CD8-positive, alpha-beta T cell (primary cell): ENCODE measurements at regions of chr1 and their contacts with region 1.

Region 1: GRCh38 chr1:204506961-204507387 is 9.2 kb upstream of the MDM4 start:
- DNase-seq: peak; percentile 73 to 97 (median 85)
- ATAC-seq: peak; percentile 73
- H3K4me3 ChIP-seq: peak overlapping the region; percentile 39 to 64
- H3K4me3 Mint-ChIP-seq: peak overlapping the region; percentile 86
- H3K27ac ChIP-seq: peak overlapping the region; percentile 84 to 96
- H3K27ac Mint-ChIP-seq: peak overlapping the region; percentile 97
- H3K4me1 ChIP-seq: peaks cover 15% of the 10 kb centered on the region
- H3K4me1 Mint-ChIP-seq: peaks cover 33% of the 10 kb centered on the region
- H3K27me3 ChIP-seq: no peaks in the 10 kb centered on the region
- H3K27me3 Mint-ChIP-seq: no peaks in the 10 kb centered on the region
- CTCF ChIP-seq: no peak

Region 2: DNA sequence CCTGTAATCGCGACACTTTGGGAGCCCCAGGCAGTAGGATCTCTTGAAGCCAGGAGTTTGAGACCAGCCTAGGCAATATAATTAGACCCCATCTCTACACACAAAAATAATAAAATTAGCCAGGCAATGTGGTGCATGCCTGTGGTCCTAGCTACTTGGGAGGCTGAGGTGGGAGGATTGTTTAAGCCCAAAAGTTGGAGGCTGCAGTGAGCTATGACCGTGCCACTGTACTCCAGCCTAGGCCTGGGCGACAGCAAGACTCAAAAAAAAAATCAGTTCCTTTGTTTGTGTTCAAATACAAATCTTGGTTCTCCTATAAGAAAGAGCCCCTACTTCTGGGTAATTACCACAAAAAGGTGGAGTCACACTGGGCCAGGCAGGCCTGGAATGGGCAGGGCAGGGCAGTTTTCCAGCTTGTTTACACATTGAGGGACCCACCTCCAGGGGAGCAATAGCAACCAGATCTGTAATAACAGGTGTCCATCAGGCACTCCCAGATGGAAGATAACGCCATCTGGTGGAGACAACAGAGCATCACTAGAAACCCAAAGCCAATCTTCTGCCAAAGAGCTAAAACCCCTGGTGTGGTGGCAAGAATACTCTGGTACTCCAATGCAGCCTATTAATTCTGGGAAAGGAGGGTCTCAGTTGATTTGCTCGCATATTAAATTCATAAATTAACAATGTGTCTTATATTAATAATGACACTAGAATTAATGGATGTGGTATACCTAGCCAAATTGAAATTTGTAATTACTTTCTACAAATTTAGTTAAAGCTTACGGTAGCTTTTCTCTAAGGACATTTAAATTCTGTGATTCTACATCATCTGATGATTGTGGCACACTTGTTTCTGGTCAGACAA is 108.5 kb before region 1 on chr1:
- CTCF ChIA-PET with region 1: interaction called, 19 read pairs
- POLR2A ChIA-PET with region 1: interaction called, 3 read pairs
- intact Hi-C with region 1: no loop called
- DNase-seq: peak; percentile 16 to 86 (median 54)
- ATAC-seq: peak; percentile 97
- H3K4me3 ChIP-seq: no peak overlapping the region
- H3K4me3 Mint-ChIP-seq: no peak overlapping the region
- H3K27ac ChIP-seq: peak overlapping the region in 1 of 2 experiments; percentile 21
- H3K27ac Mint-ChIP-seq: peak overlapping the region; percentile 80
- H3K4me1 ChIP-seq: peaks cover 4% of the 10 kb centered on the region
- H3K4me1 Mint-ChIP-seq: peaks cover 9% of the 10 kb centered on the region
- H3K27me3 ChIP-seq: no peaks in the 10 kb centered on the region
- H3K27me3 Mint-ChIP-seq: no peaks in the 10 kb centered on the region
- CTCF ChIP-seq: peak; percentile 87

Region 3: DNA sequence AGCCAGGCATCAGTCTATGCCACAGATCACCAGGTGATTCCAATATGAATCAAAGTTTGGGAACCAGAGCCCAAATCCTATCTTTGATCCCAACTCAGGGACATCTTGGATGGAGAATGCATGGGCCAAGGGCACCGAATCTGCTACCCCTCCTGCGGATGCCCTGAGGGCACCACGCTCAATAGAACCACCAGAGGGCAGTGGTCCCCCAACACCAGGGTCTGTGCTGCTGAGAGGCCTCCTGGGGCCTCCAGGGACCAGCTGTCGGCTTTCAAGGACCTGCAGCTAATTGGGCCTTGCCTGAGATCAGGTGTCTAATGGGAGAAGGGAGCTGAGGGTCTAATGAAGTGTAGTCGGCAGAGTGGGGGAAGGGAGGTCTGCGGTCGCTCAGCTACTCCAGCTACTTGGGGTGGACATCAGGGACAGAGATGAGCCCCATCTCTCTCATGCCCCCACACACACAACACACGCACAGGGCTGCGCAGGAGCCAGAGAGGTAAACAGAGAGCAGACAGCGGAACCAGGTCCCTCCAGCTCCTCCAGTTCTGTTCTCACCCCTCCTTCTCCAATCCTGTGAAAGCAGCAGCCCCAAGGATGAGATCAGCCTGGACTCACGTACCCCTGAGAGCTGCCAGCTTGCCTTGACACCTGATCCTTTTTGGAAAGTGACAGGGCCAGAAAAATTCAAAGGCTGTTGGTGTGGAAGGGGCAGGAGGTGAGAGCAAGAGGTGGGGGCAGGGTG is 60.4 kb before region 1 on chr1:
- CTCF ChIA-PET with region 1: interaction called, 1,205 read pairs
- POLR2A ChIA-PET with region 1: interaction called, 12 read pairs
- intact Hi-C with region 1: loop called (anchors 1 kb)
- DNase-seq: peak; percentile 58 to 86 (median 81)
- ATAC-seq: peak; percentile 98
- H3K4me3 ChIP-seq: no peak overlapping the region
- H3K4me3 Mint-ChIP-seq: no peak overlapping the region
- H3K27ac ChIP-seq: no peak overlapping the region
- H3K27ac Mint-ChIP-seq: peak overlapping the region; percentile 78
- H3K4me1 ChIP-seq: peaks cover 11% of the 10 kb centered on the region
- H3K4me1 Mint-ChIP-seq: peaks cover 8% of the 10 kb centered on the region
- H3K27me3 ChIP-seq: no peaks in the 10 kb centered on the region
- H3K27me3 Mint-ChIP-seq: no peaks in the 10 kb centered on the region
- CTCF ChIP-seq: peak; percentile 65

Region 4: DNA sequence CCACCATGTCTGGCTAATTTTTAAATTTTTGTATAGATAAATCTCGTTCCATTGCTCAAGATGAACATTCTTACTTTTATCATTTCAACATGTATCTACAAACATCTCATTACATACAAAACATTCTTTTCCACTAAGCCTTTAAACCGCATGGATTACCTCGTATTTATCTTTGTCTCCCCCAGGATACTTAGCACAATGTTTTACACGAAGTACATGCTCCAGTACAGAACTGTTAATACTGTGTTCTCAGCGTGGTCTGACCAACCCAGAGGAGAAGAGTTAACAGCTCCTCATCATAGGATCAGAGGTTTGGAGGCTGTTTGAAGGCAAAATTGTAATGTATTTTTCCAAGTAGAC is 19.7 kb before region 1 on chr1:
- CTCF ChIA-PET with region 1: interaction called, 83 read pairs
- POLR2A ChIA-PET with region 1: interaction called, 38 read pairs
- intact Hi-C with region 1: no loop called
- DNase-seq: no peak
- ATAC-seq: no peak
- H3K4me3 ChIP-seq: no peak overlapping the region
- H3K4me3 Mint-ChIP-seq: no peak overlapping the region
- H3K27ac ChIP-seq: no peak overlapping the region
- H3K27ac Mint-ChIP-seq: no peak overlapping the region
- H3K4me1 ChIP-seq: peaks cover 4% of the 10 kb centered on the region
- H3K4me1 Mint-ChIP-seq: peaks cover 50% of the 10 kb centered on the region
- H3K27me3 ChIP-seq: no peaks in the 10 kb centered on the region
- H3K27me3 Mint-ChIP-seq: no peaks in the 10 kb centered on the region
- CTCF ChIP-seq: no peak

Region 5: DNA sequence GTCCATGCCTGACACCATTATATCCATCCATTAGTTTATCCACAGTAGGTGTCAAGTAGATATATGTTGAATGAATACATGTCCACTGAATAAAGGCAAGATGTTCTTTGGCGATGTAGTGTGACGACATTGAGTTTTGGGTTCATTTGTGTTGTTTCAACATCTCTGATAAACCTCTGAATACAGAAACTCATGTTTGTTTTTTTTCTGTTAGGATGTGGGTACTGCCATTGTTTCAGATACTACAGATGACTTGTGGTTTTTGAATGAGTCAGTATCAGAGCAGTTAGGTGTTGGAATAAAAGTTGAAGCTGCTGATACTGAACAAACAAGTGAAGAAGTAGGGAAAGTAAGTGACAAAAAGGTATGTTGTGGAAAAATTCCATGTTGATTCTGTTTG is 37.3 kb after region 1 on chr1:
- CTCF ChIA-PET with region 1: interaction called, 20 read pairs
- POLR2A ChIA-PET with region 1: interaction called, 19 read pairs
- intact Hi-C with region 1: loop called (anchors 1 to 5 kb)
- DNase-seq: peak in 2 of 9 experiments; percentile 63 to 78
- ATAC-seq: peak; percentile 91
- H3K4me3 ChIP-seq: no peak overlapping the region
- H3K4me3 Mint-ChIP-seq: peak overlapping the region; percentile 8
- H3K27ac ChIP-seq: peak overlapping the region; percentile 24 to 86
- H3K27ac Mint-ChIP-seq: peak overlapping the region; percentile 88
- H3K4me1 ChIP-seq: peaks cover 51% of the 10 kb centered on the region
- H3K4me1 Mint-ChIP-seq: peaks cover 60% of the 10 kb centered on the region
- H3K27me3 ChIP-seq: no peaks in the 10 kb centered on the region
- H3K27me3 Mint-ChIP-seq: no peaks in the 10 kb centered on the region
- CTCF ChIP-seq: no peak

Region 6: DNA sequence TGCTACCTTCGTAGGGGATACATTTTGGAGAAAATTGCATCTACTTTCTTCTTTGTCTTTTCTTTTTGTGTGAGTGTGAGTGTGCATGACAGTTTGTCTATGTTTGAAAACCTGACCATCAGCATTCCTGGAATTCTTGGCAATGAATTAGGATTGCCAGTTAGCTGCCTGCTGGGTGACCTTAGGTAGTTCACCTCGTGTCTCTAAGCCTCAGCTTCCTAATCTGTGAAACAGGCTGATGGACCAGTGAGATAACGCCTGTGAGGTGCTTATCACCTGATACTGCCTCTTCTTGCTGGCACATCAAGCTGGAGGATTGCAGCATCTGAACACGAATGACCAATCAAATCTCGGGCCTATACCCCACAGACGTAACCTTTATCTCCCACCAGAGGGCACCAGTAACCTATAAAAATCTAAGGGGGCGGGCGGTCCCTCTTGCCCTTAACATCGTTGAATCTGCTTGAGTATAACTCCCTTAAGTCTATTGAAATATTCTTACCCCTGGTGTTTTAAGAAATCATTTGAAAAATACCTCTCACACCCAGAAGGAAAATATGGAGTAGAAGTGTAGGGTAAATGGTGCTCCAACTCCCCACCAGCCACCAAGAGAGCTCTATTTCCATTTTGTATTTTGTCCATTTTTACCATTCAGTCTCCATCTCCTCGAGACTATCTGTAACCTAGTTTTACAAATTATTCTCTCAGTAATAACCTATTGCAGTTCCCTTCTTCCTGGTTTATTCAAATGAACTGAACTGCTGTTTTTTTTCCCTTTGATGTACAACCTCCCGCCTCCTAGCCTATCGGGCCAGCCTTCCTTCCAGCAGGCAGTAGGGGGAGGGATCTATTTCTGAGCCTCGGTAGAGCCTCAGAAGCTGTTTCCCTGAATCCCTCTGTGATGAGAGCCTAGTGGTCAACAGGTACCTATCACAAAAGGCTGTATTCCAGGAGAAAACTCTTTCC is 58.9 kb after region 1 on chr1:
- CTCF ChIA-PET with region 1: interaction called, 7 read pairs
- POLR2A ChIA-PET with region 1: interaction called, 10 read pairs
- intact Hi-C with region 1: no loop called
- DNase-seq: peak; percentile 25 to 84 (median 55)
- ATAC-seq: peak; percentile 93
- H3K4me3 ChIP-seq: no peak overlapping the region
- H3K4me3 Mint-ChIP-seq: no peak overlapping the region
- H3K27ac ChIP-seq: peak overlapping the region in 1 of 2 experiments; percentile 9
- H3K27ac Mint-ChIP-seq: peak overlapping the region; percentile 10
- H3K4me1 ChIP-seq: peaks cover 35% of the 10 kb centered on the region
- H3K4me1 Mint-ChIP-seq: peaks cover 52% of the 10 kb centered on the region
- H3K27me3 ChIP-seq: no peaks in the 10 kb centered on the region
- H3K27me3 Mint-ChIP-seq: no peaks in the 10 kb centered on the region
- CTCF ChIP-seq: peak; percentile 70